ENCODE measurements at regions of chr10 and their contacts with region 1.

Region 1: DNA sequence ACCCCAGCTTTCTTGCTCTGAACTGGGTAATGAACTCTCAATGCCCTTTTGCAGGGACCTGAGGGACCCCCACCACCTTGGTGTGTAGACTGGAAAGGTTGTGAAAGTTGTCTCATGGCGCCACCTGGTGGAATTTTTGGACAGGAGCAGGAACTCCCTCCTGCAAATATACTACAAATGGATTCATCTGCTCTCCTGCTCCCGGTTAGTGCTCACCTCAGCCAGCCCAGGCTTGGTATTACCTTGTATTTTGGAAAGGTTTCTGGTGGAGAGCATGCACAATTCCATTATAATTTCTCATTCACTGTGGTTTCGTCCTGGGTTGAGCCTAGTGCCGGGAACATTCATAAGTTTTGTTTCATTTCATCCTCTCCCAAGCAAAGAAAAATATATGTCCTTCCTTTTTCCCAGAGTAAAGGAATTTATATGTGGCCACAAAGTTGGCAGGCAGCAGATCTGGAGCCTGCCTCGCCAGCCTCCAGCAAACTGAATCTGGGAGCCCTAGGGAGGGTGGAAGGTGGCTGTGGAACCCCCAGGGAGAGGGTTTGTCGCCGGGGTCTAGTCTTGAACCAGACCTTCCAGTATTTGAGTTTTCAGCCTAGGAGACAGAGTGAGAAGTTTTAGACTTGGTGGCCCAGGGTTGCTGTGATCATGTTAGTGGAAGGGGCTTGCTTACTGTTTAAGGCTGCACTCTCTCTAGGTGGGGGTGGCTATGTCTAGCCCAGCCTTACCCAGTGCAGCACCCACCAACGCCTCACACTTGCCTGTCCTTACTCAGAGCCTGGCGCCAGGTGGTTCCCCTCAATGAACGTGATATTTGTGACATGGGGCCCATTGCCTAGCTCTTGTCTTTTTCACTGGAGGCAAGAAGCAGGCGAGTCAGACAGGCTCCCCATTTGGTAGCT is 9.5 kb downstream of the FAM241B start:
- DNase-seq: peak; percentile 76
- H3K4me3 Mint-ChIP-seq: no peak overlapping the region
- H3K27ac Mint-ChIP-seq: no peak overlapping the region
- H3K4me1 Mint-ChIP-seq: no peaks in the 10 kb centered on the region
- H3K27me3 Mint-ChIP-seq: no peaks in the 10 kb centered on the region

Region 2: DNA sequence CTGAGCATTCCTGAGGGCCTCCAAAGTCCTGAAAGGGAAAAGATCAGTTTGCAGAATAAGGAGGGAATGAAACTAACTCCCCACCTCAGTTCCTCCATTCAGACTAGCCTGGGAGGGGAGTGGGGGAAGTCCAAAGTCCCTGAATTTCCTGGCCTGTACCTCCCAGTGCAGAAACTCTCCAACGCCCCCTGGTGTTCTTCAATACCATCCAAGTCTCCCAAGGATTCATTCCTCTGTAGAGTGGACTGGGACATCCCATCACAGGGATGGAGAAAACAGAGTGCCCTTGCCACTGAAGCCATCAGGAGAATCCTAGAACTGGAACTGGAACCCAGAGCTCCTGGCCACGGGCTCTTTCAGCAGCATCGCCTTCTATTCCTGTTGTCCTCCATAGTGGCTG is 160.6 kb after region 1 on chr10:
- CTCF ChIA-PET with region 1: no interaction called
- POLR2A ChIA-PET with region 1: no interaction called
- intact Hi-C with region 1: loop called (anchors 5 kb)
- DNase-seq: no peak
- H3K4me3 Mint-ChIP-seq: no peak overlapping the region
- H3K27ac Mint-ChIP-seq: no peak overlapping the region
- H3K4me1 Mint-ChIP-seq: peaks cover 11% of the 10 kb centered on the region
- H3K27me3 Mint-ChIP-seq: peaks cover 49% of the 10 kb centered on the region

Measured in activated CD4-positive, alpha-beta memory T cell treated with anti-CD3 and anti-CD28 coated beads for 36 hours (primary cell).